CD4-positive, alpha-beta T cell (primary cell): ENCODE measurements at regions of chr7 and their contacts with region 1.

Region 1: DNA sequence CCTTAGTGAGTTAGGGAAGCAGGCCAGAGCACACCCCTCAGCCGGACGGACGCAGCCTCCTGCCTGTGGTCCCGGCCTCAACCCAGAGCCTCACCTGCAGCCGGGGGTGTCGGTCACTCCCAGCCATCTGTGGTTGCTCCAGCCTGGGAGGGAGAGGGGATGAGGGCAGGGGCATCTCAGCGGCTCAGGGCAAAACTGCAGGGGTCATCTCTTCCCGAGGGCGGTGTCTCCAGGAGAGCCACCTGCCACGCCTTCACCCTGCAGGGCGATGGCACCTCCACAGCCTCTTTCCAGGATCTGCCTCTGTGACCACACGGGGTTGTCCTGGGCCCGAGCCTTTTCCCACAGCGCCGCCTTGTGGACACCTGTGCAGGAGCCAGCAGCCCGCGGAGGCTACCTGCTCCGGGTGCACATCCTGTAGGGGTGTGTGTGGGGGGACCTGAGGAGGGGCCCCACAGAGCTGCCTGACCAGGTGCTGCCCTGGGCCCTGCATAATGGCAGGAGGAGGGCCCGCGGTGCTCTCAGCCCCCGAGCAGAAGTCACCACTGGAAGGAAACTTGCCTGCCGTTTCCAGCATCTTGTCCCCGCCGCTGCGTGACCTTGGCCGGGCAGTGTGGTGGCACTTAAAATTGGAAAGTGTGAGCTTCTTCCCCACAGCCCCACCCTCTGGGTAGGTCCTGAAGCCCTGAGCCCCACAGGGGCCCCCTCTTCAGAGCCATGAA is 21.6 kb upstream of the AP5Z1 start:
- DNase-seq: peak; percentile 81 to 92 (median 86)
- ATAC-seq: peak; percentile 98
- H3K4me3 ChIP-seq: no peak overlapping the region
- H3K4me3 Mint-ChIP-seq: peak overlapping the region; percentile 48
- H3K27ac ChIP-seq: peak overlapping the region in 1 of 2 donors; percentile 29
- H3K27ac Mint-ChIP-seq: peak overlapping the region; percentile 78
- H3K4me1 ChIP-seq: peaks cover 32% of the 10 kb centered on the region
- H3K4me1 Mint-ChIP-seq: peaks cover 19% of the 10 kb centered on the region
- H3K27me3 ChIP-seq: no peaks in the 10 kb centered on the region
- H3K27me3 Mint-ChIP-seq: no peaks in the 10 kb centered on the region
- CTCF ChIP-seq: peak; percentile 78

Region 2: DNA sequence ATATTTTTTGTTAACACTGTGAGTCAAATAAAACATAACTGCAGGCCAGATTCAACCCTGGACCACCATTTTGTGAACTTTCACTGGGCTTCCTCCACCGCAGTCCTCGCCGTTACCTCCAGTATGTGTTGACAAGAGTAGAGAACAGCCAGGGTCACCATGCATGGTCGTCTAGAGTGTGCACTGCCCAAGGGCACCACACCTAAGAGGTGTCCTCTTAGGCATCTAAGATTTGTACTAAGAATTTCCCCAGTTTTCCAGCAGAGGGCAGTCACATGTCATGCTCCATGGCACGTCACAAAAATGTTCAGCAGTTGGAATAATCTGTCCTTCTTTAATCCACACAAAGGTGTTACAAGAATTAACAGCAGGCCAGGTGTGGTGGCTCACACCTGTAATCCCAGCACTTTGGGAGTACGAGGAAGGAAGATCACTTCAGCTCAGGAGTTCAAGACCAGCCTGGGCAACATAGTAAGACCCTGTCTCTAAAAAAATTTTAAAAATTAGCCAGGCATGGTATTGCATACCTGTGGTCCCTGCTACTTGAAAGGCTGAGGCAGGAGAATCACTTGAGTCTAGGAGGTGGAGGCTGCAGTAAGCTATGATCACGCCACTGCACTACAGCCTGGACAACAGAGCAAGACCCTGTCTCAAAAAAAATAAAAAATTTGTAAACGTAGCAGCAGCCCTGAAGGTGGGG is 143.0 kb before region 1 on chr7:
- CTCF ChIA-PET with region 1: interaction called, 3 read pairs
- POLR2A ChIA-PET with region 1: no interaction called
- intact Hi-C with region 1: loop called (anchors 1 kb)
- DNase-seq: peak; percentile 23 to 84 (median 40)
- ATAC-seq: peak; percentile 91
- H3K4me3 ChIP-seq: no peak overlapping the region
- H3K4me3 Mint-ChIP-seq: no peak overlapping the region
- H3K27ac ChIP-seq: no peak overlapping the region
- H3K27ac Mint-ChIP-seq: no peak overlapping the region
- H3K4me1 ChIP-seq: peaks cover 12% of the 10 kb centered on the region
- H3K4me1 Mint-ChIP-seq: peaks cover 20% of the 10 kb centered on the region
- H3K27me3 ChIP-seq: no peaks in the 10 kb centered on the region
- H3K27me3 Mint-ChIP-seq: peaks cover 4% of the 10 kb centered on the region
- CTCF ChIP-seq: peak; percentile 84

Region 3: DNA sequence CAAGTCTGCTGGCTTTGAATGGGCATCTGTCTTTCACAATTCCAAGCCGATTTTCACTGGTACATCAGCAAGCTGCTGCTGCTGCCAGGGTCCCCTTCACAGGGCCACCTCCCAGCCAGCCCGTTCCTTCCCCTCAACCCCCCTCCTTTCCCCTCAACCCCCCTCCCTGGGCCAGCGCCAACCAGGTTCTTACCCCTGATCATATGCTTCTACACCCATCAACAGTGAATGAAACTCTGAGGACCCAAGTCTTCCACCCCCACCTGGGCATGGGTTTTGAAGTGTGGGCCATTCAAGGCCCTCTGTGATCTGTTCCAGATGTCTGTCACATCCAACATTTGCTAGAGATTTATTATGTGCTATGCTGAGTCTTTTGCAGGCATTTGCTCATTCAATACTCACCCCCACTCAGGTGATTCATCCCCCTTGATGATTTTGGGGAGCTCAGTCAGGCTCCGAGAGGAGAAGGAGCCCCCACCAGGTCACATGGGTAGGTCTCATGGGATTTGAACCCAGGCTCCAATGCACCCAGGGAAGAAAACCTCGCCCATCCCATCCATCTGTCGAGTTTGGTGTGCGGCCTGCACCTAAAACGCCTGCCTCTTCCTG is 124.5 kb before region 1 on chr7:
- CTCF ChIA-PET with region 1: no interaction called
- POLR2A ChIA-PET with region 1: no interaction called
- intact Hi-C with region 1: loop called in 1 of 2 experiments (anchors 5 kb)
- DNase-seq: no peak
- ATAC-seq: no peak
- H3K4me3 ChIP-seq: no peak overlapping the region
- H3K4me3 Mint-ChIP-seq: no peak overlapping the region
- H3K27ac ChIP-seq: no peak overlapping the region
- H3K27ac Mint-ChIP-seq: no peak overlapping the region
- H3K4me1 ChIP-seq: peaks cover 2% of the 10 kb centered on the region
- H3K4me1 Mint-ChIP-seq: peaks cover 8% of the 10 kb centered on the region
- H3K27me3 ChIP-seq: peaks cover 0 to 2% of the 10 kb centered on the region in 2 experiments
- H3K27me3 Mint-ChIP-seq: no peaks in the 10 kb centered on the region
- CTCF ChIP-seq: no peak

Region 4: GRCh38 chr7:4837803-4838625 is 84.1 kb after region 1 on chr7:
- CTCF ChIA-PET with region 1: no interaction called
- POLR2A ChIA-PET with region 1: no interaction called
- intact Hi-C with region 1: no loop called
- DNase-seq: no peak
- ATAC-seq: no peak
- H3K4me3 ChIP-seq: no peak overlapping the region
- H3K4me3 Mint-ChIP-seq: no peak overlapping the region
- H3K27ac ChIP-seq: no peak overlapping the region
- H3K27ac Mint-ChIP-seq: no peak overlapping the region
- H3K4me1 ChIP-seq: no peaks in the 10 kb centered on the region
- H3K4me1 Mint-ChIP-seq: no peaks in the 10 kb centered on the region
- H3K27me3 ChIP-seq: no peaks in the 10 kb centered on the region
- H3K27me3 Mint-ChIP-seq: no peaks in the 10 kb centered on the region
- CTCF ChIP-seq: no peak